CD4-positive, alpha-beta memory T cell (primary cell): ENCODE measurements at regions of chr14 and their contacts with region 1.

Region 1: DNA sequence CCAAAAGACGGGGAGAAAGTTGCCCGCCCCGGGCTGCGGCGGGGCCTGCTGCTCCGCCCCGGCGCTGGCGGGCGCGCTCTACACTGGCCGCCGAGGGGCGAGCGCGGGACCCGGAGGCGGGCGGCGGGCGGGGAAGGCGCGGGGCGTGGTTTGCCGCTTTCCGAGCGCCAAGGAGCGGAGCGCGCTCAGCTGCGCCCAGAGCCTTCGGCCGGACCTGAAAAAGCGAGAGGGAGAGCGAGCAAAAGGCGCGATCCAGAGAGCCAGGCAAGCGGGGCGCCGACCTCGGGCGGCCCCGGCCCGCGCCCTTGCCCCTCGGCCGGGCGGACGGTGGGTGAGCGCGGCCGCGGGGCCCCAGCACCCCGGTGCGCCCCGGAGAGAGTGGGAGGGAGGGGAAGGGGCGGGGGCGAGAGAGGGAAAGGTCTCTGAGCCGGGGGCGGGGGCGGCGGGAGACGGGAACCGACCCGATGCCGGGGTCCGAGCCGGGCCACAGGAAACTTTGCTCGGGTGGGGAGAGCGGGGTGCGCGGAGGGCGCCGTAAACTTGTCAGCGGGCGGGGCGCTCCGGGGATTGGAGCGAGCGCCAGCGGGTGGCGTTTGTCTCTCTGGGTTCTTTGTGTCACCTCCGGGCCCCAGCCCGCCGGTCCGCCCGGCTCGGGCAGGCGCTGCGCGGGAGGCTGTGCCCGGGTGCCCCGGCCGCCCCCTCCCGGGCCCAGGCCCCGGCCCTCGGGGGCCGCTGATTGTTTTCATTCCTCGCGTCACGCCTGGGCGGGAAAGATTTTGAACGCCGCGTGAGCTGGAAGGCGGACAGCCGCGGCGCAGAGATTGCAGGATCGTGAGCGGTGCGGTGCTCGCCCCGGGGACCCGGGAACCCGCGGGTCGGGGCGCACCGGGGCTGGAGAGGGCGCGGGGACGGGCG is at the start of gene SYNE2:
- DNase-seq: peak; percentile 78 to 85 (median 82)
- H3K4me3 ChIP-seq: peak within 1 kb of the TSS; percentile 68 to 72
- H3K4me3 Mint-ChIP-seq: peak within 1 kb of the TSS; percentile 97 to 99 (median 99)
- H3K27ac ChIP-seq: peak within 1 kb of the TSS; percentile 79
- H3K27ac Mint-ChIP-seq: peak within 1 kb of the TSS; percentile 93 to 98 (median 97)
- H3K4me1 ChIP-seq: peaks cover 42% of the 10 kb centered on the region
- H3K4me1 Mint-ChIP-seq: peaks cover 29 to 47% (median 38%) of the 10 kb centered on the region in 4 donors
- H3K27me3 ChIP-seq: no peaks in the 10 kb centered on the region
- H3K27me3 Mint-ChIP-seq: peaks cover 0 to 3% of the 10 kb centered on the region in 2 donors
- total RNA-seq, gene SYNE2: 259 to 280 TPM

Region 2: DNA sequence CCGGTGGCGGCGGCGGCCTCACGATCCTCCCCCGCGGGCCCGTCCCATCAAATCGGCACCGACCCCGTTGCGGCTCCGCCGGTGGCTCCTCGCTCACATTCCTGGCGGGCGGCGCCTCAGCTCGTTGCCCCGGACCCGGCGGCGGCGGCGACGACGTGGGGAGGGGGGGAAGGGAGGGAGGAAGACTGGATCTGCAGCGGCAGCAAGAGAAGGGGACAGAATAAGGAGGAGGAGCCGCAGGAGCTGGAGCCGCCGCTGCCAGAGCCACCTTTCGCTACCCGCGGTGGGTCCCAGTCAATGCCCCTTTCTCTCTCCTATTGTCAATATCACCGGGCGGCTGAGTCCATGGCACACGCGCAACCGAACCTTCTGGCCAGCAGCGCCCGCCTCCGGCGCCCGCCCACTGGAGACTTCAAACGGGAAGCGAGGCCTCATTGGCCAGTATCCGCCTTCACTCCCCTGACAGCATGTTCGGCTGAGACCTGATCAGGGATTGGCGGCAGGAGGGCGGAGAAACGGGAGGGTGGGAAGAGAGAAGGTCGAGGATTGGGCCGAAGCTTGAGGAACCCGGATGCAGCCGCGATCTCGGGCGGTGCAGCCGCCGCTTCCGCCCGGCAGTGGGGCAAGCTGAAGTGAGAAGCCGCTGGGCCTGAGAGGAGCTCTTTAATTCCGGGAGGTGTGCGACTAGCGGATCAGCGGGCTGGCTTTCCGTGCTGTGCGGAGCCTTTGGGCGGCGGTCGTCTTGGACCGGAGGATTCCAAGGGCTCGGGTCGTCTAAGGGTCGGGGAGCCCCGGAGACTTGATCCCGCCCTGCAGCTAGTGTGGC is 309.9 kb before region 1 on chr14 and contains the start of gene PPP2R5E:
- CTCF ChIA-PET with region 1: no interaction called
- POLR2A ChIA-PET with region 1: no interaction called
- intact Hi-C with region 1: loop called (anchors 10 kb)
- DNase-seq: peak; percentile 97 to 99 (median 98)
- H3K4me3 ChIP-seq: peak within 1 kb of the TSS; percentile 68 to 83
- H3K4me3 Mint-ChIP-seq: peak within 1 kb of the TSS; percentile 97 to 99 (median 98)
- H3K27ac ChIP-seq: peak within 1 kb of the TSS; percentile 91
- H3K27ac Mint-ChIP-seq: peak within 1 kb of the TSS; percentile 92 to 98 (median 97)
- H3K4me1 ChIP-seq: peaks cover 26% of the 10 kb centered on the region
- H3K4me1 Mint-ChIP-seq: peaks cover 26 to 48% (median 33%) of the 10 kb centered on the region in 4 donors
- H3K27me3 ChIP-seq: no peaks in the 10 kb centered on the region
- H3K27me3 Mint-ChIP-seq: peaks cover 0 to 1% of the 10 kb centered on the region in 2 donors
- total RNA-seq, gene PPP2R5E: 36.2 to 38.0 TPM

Region 3: GRCh38 chr14:63672417-63673180 is 180.5 kb before region 1 on chr14:
- CTCF ChIA-PET with region 1: no interaction called
- POLR2A ChIA-PET with region 1: no interaction called
- intact Hi-C with region 1: no loop called
- DNase-seq: no peak
- H3K4me3 ChIP-seq: no peak overlapping the region
- H3K4me3 Mint-ChIP-seq: no peak overlapping the region
- H3K27ac ChIP-seq: no peak overlapping the region
- H3K27ac Mint-ChIP-seq: peak overlapping the region in 1 of 7 donors; percentile 81
- H3K4me1 ChIP-seq: no peaks in the 10 kb centered on the region
- H3K4me1 Mint-ChIP-seq: peaks cover 0 to 1% (median 0%) of the 10 kb centered on the region in 4 donors
- H3K27me3 ChIP-seq: no peaks in the 10 kb centered on the region
- H3K27me3 Mint-ChIP-seq: no peaks in the 10 kb centered on the region

Region 4: DNA sequence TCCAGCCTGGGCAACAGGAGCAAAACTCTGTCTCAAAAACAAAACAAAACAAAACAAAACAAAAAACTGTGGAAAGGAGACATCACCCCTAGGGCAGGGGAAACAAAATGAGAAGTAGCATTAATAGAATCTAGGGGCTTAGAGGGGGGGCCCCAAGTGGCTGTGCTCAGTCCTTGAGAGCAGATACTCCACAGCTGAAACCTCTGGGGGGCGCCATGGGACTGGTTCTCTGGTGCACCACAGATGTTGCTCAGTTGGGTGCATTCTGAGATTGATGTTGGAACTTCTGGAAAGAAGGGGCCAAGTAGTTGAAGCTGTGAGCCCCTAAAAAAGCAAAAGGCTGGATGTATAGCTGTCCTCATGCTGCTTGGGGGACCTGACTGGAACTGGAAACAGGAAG is 12.1 kb before region 1 on chr14:
- CTCF ChIA-PET with region 1: interaction called, 11 read pairs
- POLR2A ChIA-PET with region 1: no interaction called
- intact Hi-C with region 1: no loop called
- DNase-seq: peak; percentile 61 to 72 (median 63)
- H3K4me3 ChIP-seq: no peak overlapping the region
- H3K4me3 Mint-ChIP-seq: no peak overlapping the region
- H3K27ac ChIP-seq: no peak overlapping the region
- H3K27ac Mint-ChIP-seq: peak overlapping the region in 1 of 7 donors; percentile 16
- H3K4me1 ChIP-seq: peaks cover 6% of the 10 kb centered on the region
- H3K4me1 Mint-ChIP-seq: peaks cover 0 to 4% (median 1%) of the 10 kb centered on the region in 4 donors
- H3K27me3 ChIP-seq: no peaks in the 10 kb centered on the region
- H3K27me3 Mint-ChIP-seq: no peaks in the 10 kb centered on the region

Region 5: GRCh38 chr14:63887899-63888298 is 34.8 kb after region 1 on chr14:
- CTCF ChIA-PET with region 1: no interaction called
- POLR2A ChIA-PET with region 1: interaction called, 13 read pairs
- intact Hi-C with region 1: loop called (anchors 5 kb)
- DNase-seq: no peak
- H3K4me3 ChIP-seq: no peak overlapping the region
- H3K4me3 Mint-ChIP-seq: no peak overlapping the region
- H3K27ac ChIP-seq: no peak overlapping the region
- H3K27ac Mint-ChIP-seq: no peak overlapping the region
- H3K4me1 ChIP-seq: peaks cover 41% of the 10 kb centered on the region
- H3K4me1 Mint-ChIP-seq: peaks cover 32 to 67% (median 50%) of the 10 kb centered on the region in 4 donors
- H3K27me3 ChIP-seq: no peaks in the 10 kb centered on the region
- H3K27me3 Mint-ChIP-seq: no peaks in the 10 kb centered on the region

Region 6: GRCh38 chr14:63910583-63911363 is 57.7 kb after region 1 on chr14:
- CTCF ChIA-PET with region 1: interaction called, 11 read pairs
- POLR2A ChIA-PET with region 1: interaction called, 23 read pairs
- intact Hi-C with region 1: loop called (anchors 2 kb)
- DNase-seq: no peak
- H3K4me3 ChIP-seq: no peak overlapping the region
- H3K4me3 Mint-ChIP-seq: peak overlapping the region in 6 of 8 donors; percentile 9 to 41 (median 28)
- H3K27ac ChIP-seq: no peak overlapping the region
- H3K27ac Mint-ChIP-seq: peak overlapping the region in 3 of 7 donors; percentile 26 to 89 (median 38)
- H3K4me1 ChIP-seq: peaks cover 48% of the 10 kb centered on the region
- H3K4me1 Mint-ChIP-seq: peaks cover 34 to 75% (median 55%) of the 10 kb centered on the region in 4 donors
- H3K27me3 ChIP-seq: no peaks in the 10 kb centered on the region
- H3K27me3 Mint-ChIP-seq: no peaks in the 10 kb centered on the region

Region 7: DNA sequence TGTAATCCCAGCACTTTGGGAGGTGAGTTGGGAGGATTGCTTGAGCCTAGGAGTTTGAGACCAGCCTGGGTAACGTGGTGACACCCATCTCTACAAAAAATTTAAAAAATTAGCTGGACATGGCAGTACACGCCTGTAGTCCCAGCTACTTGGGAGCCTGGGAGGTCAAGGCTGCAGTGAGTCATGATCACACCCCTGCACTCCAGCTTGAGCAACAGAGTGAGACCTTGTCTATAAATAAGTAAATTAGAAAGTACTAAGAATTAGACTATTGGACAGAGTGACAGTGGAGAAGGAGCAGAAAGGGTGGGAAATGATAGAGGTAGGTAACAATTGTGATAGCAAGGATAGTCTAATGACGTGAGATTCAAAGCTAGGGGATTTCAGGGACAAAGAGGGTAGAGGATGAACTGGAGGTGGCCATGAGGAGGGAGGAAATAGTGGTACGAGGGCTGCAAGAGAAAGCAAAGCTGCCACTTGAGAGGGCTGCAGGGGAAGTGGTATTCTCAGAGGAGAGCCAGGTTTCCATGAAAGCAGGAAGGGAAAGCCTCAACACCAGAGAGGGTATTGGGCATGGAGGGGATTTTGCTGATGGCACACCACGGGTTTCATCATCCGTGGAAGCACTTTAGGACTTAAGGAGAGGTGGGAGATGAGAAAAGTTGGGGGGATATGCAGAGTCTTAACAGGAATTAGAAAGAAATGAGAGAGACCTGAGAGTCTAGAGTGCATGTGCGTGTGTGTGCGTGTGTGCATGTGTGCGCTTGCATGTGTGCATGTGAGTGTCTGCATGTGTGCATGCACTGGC is 85.3 kb after region 1 on chr14:
- CTCF ChIA-PET with region 1: interaction called, 23 read pairs
- POLR2A ChIA-PET with region 1: interaction called, 57 read pairs
- intact Hi-C with region 1: loop called (anchors 1 kb)
- DNase-seq: peak in 4 of 5 donors; percentile 12 to 26 (median 20)
- H3K4me3 ChIP-seq: no peak overlapping the region
- H3K4me3 Mint-ChIP-seq: no peak overlapping the region
- H3K27ac ChIP-seq: peak overlapping the region; percentile 30
- H3K27ac Mint-ChIP-seq: no peak overlapping the region
- H3K4me1 ChIP-seq: peaks cover 76% of the 10 kb centered on the region
- H3K4me1 Mint-ChIP-seq: peaks cover 24 to 47% (median 35%) of the 10 kb centered on the region in 4 donors
- H3K27me3 ChIP-seq: no peaks in the 10 kb centered on the region
- H3K27me3 Mint-ChIP-seq: no peaks in the 10 kb centered on the region

Region 8: GRCh38 chr14:63993992-63994391 is 140.9 kb after region 1 on chr14:
- CTCF ChIA-PET with region 1: interaction called, 4 read pairs
- POLR2A ChIA-PET with region 1: no interaction called
- intact Hi-C with region 1: loop called (anchors 5 kb)
- DNase-seq: peak in 2 of 5 donors; percentile 10 to 11
- H3K4me3 ChIP-seq: no peak overlapping the region
- H3K4me3 Mint-ChIP-seq: no peak overlapping the region
- H3K27ac ChIP-seq: no peak overlapping the region
- H3K27ac Mint-ChIP-seq: peak overlapping the region in 1 of 7 donors; percentile 62
- H3K4me1 ChIP-seq: no peaks in the 10 kb centered on the region
- H3K4me1 Mint-ChIP-seq: peaks cover 0 to 4% (median 1%) of the 10 kb centered on the region in 4 donors
- H3K27me3 ChIP-seq: no peaks in the 10 kb centered on the region
- H3K27me3 Mint-ChIP-seq: no peaks in the 10 kb centered on the region